ENCODE measurements at regions of chr6 and their contacts with region 1.

Region 1: DNA sequence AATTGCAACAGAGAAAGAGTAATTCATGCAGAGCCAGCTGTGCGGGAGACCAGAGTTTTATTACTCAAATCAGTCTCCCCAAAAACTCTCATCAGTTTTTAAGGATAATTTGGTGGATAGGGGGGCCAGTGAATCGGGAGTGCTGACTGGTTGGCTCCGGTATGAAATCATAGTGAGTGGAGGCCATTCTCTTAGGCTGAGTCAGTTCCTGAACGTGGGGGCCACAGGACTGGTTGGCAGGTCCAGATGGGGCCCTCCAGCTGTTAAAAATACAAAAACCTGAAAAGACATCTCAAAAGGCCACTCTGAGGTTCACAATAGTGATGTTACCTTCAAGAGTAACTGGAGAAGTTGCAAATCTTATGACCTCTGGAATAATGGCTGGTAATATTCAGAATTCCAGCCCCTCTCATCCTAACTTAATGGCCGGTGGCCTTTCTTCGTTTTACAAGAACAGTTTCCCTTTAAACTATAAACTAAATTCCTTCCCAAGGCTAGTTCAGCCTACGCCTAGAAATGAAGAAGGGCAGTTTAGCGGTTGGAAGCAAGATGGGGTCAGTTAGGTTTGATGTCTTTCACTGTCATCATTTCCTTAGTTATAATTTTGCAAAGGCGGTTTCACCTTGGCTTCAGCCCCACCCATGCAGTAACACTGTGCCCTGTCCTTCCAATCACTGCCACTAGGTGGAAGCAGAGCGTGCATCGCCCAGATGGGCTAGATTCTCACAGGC is 6.8 kb upstream of the MICA start:
- DNase-seq: peak; percentile 89 to 91
- ATAC-seq: peak; percentile 81
- H3K4me3 ChIP-seq: no peak overlapping the region
- H3K27ac ChIP-seq: no peak overlapping the region
- H3K4me1 ChIP-seq: no peaks in the 10 kb centered on the region
- H3K27me3 ChIP-seq: no peaks in the 10 kb centered on the region

Region 2: DNA sequence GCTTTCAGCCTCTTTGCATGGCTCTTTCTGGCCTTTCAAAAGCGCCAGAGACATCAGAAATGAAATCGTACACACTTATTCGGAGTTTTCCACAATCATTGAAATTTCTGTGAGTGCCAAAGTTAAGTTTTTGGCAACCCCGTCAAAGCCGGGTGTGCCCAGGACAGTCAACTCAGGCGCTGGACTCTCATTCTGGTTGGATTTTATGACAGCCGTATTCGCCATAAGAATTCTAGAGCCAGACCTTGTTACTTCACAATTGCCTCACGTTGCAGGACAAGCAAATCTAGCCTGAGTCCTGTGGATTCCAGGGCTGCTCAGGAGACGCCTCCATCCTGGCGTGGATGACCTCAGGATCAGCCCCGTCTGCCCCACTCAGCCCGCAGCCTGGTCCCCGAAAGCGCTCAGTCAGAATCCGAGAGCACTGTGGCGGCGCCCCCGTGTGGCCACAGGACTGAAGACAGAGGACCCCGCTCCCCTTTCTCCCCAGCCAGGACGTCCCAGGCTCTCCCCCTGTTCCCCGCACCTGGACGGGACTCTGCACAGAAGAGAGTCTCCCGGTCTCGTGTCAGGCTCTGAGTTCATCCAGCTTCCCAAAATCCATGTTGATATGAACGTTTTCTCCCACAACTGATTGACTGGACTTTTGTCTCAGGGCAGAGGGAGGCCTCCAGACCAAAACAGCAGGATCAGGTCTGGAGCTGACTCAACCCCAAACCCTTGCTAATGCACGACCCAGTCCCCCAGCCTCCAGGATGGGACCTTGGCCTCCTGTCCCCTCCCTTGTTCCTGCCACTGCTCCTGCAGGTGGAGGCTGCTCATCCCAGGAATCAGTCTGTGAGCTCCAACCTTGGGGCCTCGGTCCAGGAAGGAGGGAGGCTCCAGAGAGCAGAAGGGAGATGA is 45.0 kb after region 1 on chr6:
- intact Hi-C with region 1: loop called (anchors 1 kb)
- DNase-seq: peak; percentile 90 to 97
- ATAC-seq: peak; percentile 94
- H3K4me3 ChIP-seq: no peak overlapping the region
- H3K27ac ChIP-seq: no peak overlapping the region
- H3K4me1 ChIP-seq: no peaks in the 10 kb centered on the region
- H3K27me3 ChIP-seq: no peaks in the 10 kb centered on the region

Measured in aorta (tissue), 5 donors.